ENCODE measurements at regions of chr17 and their contacts with region 1.

Region 1: GRCh38 chr17:73429440-73430164 is 117.8 kb upstream of the CDC42EP4 start:
- DNase-seq: peak; percentile 89
- H3K4me3 Mint-ChIP-seq: no peak overlapping the region
- H3K27ac Mint-ChIP-seq: no peak overlapping the region
- H3K4me1 Mint-ChIP-seq: peaks cover 2% of the 10 kb centered on the region
- H3K27me3 Mint-ChIP-seq: peaks cover 3% of the 10 kb centered on the region

Region 2: DNA sequence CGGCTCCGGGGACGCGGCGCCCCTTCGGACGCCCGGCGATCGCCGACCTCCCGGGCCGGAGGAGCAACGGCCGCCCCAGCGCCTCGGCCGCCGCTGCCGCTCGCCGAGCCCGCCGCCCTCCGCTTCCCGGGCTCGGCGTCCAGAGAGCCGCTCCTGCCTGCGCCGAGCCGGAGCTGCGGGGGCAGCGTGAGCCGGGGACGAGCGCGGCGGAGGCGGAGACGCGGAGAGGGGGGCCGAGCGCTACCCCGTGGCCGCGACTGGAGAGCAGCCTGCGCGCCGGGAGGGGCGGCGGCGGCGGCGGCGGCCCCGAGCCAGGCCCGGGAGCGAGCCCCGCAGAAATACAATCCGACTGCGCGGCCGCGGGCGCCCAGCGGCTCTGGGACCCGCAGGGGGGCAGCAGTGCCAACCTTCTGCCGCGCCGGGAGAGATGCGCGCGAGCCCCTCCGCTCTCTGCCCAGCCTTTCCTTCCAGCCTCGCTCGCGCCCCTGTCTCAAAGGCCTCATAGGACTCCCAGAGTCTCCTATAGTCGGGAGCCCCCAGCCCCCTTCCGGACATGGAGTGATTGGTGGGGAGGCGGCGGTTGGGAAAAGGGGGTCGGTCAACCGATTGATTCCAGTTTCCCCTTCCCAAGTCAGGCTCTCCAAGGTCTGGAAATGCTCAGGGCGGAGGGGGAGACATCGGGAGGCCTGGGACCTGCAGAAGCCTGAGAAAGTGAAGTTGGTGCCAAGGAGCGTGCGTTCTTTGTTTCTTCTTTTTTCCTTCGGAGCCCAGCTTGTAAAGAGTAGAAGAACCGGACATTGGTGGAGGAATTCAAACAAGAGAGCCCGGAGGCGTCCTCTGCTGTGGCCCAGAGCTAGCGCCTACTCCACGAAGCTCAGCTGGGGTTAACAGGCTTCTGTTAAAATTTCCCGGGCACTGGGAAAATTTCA is 215.7 kb after region 1 on chr17:
- CTCF ChIA-PET with region 1: interaction called, 7 read pairs
- POLR2A ChIA-PET with region 1: no interaction called
- intact Hi-C with region 1: loop called (anchors 2 kb)
- DNase-seq: peak; percentile 34
- H3K4me3 Mint-ChIP-seq: no peak overlapping the region
- H3K27ac Mint-ChIP-seq: no peak overlapping the region
- H3K4me1 Mint-ChIP-seq: peaks cover 9% of the 10 kb centered on the region
- H3K27me3 Mint-ChIP-seq: peaks cover 21% of the 10 kb centered on the region

Region 3: DNA sequence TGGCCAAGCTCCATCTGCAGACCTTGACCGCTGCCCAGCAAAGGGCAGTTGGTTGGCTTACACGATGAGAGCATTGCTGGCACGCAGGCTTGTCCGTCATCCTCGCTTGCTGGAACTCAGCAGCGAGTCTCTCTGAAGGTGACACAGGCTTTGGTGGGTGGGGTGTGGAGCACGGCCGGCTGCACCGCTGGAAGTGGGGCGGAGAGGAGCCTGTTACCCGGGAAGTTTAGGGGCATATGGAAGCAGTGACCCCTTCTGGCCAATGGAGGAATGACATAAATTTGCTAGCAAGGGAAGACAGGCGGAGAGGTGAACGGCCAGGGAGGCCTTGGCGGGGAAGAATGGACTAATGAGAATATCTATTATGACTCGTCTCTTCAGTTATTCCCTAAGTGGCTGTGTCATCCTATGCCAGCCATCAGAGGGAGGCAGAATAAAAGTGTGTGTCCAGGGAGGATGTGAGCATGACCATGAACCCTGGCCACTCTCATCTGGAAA is 280.5 kb after region 1 on chr17:
- CTCF ChIA-PET with region 1: interaction called, 63 read pairs
- POLR2A ChIA-PET with region 1: no interaction called
- intact Hi-C with region 1: loop called (anchors 1 kb)
- DNase-seq: peak; percentile 71
- H3K4me3 Mint-ChIP-seq: no peak overlapping the region
- H3K27ac Mint-ChIP-seq: no peak overlapping the region
- H3K4me1 Mint-ChIP-seq: peaks cover 10% of the 10 kb centered on the region
- H3K27me3 Mint-ChIP-seq: no peaks in the 10 kb centered on the region

Region 4: GRCh38 chr17:73956669-73957465 is 527.3 kb after region 1 on chr17:
- CTCF ChIA-PET with region 1: interaction called, 5 read pairs
- POLR2A ChIA-PET with region 1: no interaction called
- intact Hi-C with region 1: loop called (anchors 1 kb)
- DNase-seq: peak; percentile 65
- H3K4me3 Mint-ChIP-seq: no peak overlapping the region
- H3K27ac Mint-ChIP-seq: no peak overlapping the region
- H3K4me1 Mint-ChIP-seq: peaks cover 3% of the 10 kb centered on the region
- H3K27me3 Mint-ChIP-seq: peaks cover 3% of the 10 kb centered on the region

Region 5: GRCh38 chr17:74176546-74177001 is 747.0 kb after region 1 on chr17:
- CTCF ChIA-PET with region 1: interaction called, 16 read pairs
- POLR2A ChIA-PET with region 1: no interaction called
- intact Hi-C with region 1: loop called (anchors 5 kb)
- DNase-seq: peak; percentile 66
- H3K4me3 Mint-ChIP-seq: no peak overlapping the region
- H3K27ac Mint-ChIP-seq: no peak overlapping the region
- H3K4me1 Mint-ChIP-seq: no peaks in the 10 kb centered on the region
- H3K27me3 Mint-ChIP-seq: peaks cover 31% of the 10 kb centered on the region

Measured in activated CD4-positive, alpha-beta memory T cell treated with anti-CD3 and anti-CD28 coated beads for 36 hours (primary cell).